BJ (cell line): ENCODE measurements at regions of chr1 and their contacts with region 1.

Region 1: DNA sequence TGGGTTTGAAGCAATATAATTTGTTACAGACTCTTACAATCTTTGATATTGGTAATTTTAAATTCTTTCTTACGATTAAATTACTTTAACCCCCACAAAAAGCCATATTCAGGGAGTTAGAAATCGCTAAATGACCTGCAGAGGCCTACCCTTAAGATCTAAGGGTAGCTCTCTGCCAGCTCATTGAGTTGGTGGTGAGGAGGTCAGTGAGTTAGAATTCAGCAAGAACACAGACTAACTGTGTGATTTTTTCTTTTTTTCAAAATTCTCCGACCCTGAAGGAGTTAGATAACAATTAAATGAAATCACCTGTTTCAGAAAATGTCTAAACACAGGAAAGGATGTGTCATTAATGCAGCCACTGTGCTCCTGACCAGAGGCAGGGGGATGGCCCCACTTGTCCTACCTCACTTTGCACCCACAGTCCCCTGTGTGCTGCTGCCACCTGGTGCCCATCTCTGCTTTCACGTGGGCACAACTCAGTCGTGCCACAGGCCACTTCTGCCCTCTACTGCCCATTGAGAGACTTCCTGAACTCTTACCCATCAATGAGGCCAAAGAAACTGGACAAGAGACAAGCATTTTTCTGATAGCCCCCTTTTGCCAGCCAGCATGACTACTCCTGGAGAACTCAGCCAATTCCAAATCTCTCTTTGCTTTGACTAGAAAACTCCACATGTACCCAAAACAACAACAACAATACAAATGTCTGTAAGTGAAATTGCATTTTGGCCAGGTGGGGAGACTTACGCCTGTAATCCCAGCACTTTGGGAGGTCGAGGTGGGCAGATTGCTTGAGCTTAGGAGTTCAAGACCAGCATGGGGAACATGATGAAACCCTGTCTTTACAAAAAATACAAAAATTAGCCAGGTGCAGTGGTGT is 8.4 kb downstream of the CFAP45 start:
- DNase-seq: peak; percentile 50
- H3K4me3 ChIP-seq: no peak overlapping the region
- H3K27me3 ChIP-seq: no peaks in the 10 kb centered on the region
- CTCF ChIP-seq: peak; percentile 97

Region 2: GRCh38 chr1:159780583-159781582 is 110.6 kb before region 1 on chr1 and contains the start of gene DUSP23:
- CTCF ChIA-PET with region 1: interaction called, 38 read pairs
- POLR2A ChIA-PET with region 1: no interaction called
- DNase-seq: peak; percentile 94
- H3K4me3 ChIP-seq: peak within 1 kb of the TSS; percentile 90
- H3K27me3 ChIP-seq: peaks cover 2% of the 10 kb centered on the region
- CTCF ChIP-seq: peak; percentile 97
- polyA plus RNA-seq, gene DUSP23: 16.0 and 22.8 TPM in 2 replicates

Region 3: DNA sequence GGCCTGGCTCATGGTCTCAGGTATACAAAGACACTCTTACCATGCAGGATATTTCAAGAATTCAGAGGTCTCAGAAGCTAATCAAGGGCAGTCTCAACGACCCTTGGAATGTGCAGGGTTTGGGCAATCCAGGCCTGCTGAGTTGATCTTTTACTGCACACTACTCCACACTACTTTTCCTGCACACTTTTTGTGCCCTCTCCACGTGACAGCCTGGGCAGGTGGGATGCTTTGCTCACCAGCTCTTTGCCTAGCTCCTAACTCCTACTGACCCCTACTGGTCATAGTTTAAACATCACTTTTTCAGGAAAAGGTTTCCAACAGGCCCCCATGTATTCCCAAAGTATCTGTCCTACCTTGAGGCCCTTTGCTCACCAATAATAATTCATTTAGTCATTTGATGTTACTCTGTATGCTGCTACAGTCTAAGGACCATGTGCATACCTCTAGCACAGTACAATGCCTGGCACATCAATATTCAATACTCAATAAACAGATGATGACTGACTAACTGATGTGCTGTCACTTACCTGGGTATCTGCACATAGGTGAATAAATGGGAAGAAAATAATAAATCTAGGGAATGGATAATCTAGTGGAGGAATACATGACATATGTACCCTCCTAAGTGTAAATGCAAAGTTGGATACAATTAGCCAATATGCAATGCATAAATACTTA is 101.1 kb before region 1 on chr1:
- CTCF ChIA-PET with region 1: interaction called, 590 read pairs
- POLR2A ChIA-PET with region 1: no interaction called
- DNase-seq: no peak
- H3K4me3 ChIP-seq: no peak overlapping the region
- H3K27me3 ChIP-seq: peaks cover 10% of the 10 kb centered on the region
- CTCF ChIP-seq: peak; percentile 65

Region 4: GRCh38 chr1:159831412-159832141 is 59.9 kb before region 1 on chr1:
- CTCF ChIA-PET with region 1: interaction called, 17 read pairs
- POLR2A ChIA-PET with region 1: no interaction called
- DNase-seq: no peak
- H3K4me3 ChIP-seq: no peak overlapping the region
- H3K27me3 ChIP-seq: no peaks in the 10 kb centered on the region
- CTCF ChIP-seq: no peak

Region 5: DNA sequence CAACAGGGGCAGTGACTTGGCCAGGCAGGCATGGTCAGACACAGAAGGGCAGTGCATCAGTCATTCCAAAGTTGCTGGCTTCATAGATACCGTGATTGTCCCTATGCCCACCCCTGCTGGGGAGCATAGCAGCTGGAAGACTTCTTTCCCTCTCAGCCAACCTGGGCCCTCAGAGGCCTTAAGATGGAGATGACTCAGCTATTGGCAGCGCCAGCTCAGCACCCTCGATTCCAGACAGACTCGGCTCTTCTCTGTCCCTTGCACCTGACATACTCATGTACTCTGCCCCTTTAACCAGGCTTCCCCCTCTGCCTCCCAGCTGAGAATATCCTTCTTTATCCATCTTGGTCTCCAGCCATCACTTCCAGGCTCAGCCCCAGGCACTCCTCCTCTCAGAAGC is 48.1 kb before region 1 on chr1:
- CTCF ChIA-PET with region 1: interaction called, 13 read pairs
- POLR2A ChIA-PET with region 1: no interaction called
- DNase-seq: no peak
- H3K4me3 ChIP-seq: no peak overlapping the region
- H3K27me3 ChIP-seq: no peaks in the 10 kb centered on the region
- CTCF ChIP-seq: no peak

Region 6: GRCh38 chr1:159851407-159851806 is 40.1 kb before region 1 on chr1:
- CTCF ChIA-PET with region 1: interaction called, 11 read pairs
- POLR2A ChIA-PET with region 1: no interaction called
- DNase-seq: no peak
- H3K4me3 ChIP-seq: no peak overlapping the region
- H3K27me3 ChIP-seq: no peaks in the 10 kb centered on the region
- CTCF ChIP-seq: no peak

Region 7: GRCh38 chr1:159924981-159925712 is 33.6 kb after region 1 on chr1 and contains the start of gene TAGLN2:
- CTCF ChIA-PET with region 1: interaction called, 11 read pairs
- POLR2A ChIA-PET with region 1: no interaction called
- DNase-seq: peak; percentile 70
- H3K4me3 ChIP-seq: peak within 1 kb of the TSS; percentile 81
- H3K27me3 ChIP-seq: no peaks in the 10 kb centered on the region
- CTCF ChIP-seq: no peak
- polyA plus RNA-seq, gene TAGLN2: 628 and 745 TPM in 2 replicates